ENCODE measurements at regions of chr1 and their contacts with region 1.

Region 1: DNA sequence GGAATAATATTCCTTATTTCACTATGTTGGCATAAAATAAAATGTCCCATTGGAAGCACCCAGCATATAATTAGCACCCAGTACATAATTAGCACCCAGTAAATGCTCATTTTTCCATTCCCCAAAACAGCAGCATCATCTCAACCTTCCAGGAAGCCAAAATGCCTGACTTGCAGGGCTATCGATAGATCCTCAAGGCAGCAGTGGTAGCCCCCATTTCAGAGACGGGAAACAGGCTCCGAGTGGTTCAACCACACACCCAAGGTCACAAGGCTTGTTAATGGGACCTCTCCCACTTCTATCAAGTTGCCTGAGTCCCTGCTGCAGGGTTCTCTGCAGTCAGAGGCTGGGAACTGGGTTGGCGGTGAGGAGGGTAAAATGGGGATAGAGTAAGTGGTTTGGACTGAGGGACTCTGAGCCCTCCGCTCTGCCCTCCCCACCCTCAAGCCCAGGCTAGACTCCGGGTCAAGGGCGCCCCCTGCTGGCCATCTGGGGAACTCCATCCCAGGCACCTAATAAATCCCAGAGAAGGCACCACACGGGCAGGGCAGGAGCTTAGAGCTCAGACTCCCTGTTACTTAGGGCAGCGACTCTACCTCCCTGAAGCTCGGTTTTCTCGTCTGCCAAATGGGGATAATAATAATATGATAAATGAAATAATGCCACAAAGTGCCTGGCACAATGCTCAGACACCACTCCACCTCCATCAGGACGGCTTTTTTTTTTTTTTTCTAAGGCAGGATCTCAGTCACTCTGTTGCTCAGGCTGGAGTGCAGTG is 21.9 kb upstream of the LAPTM5 start:
- DNase-seq: peak; percentile 96
- ATAC-seq: peak; percentile 77
- H3K4me3 Mint-ChIP-seq: peak overlapping the region; percentile 15
- H3K27ac Mint-ChIP-seq: peak overlapping the region; percentile 87
- H3K4me1 Mint-ChIP-seq: peaks cover 47% of the 10 kb centered on the region
- H3K27me3 Mint-ChIP-seq: no peaks in the 10 kb centered on the region
- CTCF ChIP-seq: peak; percentile 79

Region 2: GRCh38 chr1:29230553-29231378 is 1548.7 kb before region 1 on chr1 and contains the start of gene MECR:
- CTCF ChIA-PET with region 1: no interaction called
- POLR2A ChIA-PET with region 1: no interaction called
- intact Hi-C with region 1: loop called (anchors 10 kb)
- DNase-seq: peak; percentile 98
- ATAC-seq: peak; percentile 97
- H3K4me3 Mint-ChIP-seq: peak within 1 kb of the TSS; percentile 93
- H3K27ac Mint-ChIP-seq: peak within 1 kb of the TSS; percentile 84
- H3K4me1 Mint-ChIP-seq: peaks cover 18% of the 10 kb centered on the region
- H3K27me3 Mint-ChIP-seq: peaks cover 11% of the 10 kb centered on the region
- CTCF ChIP-seq: no peak
- total RNA-seq, gene MECR: 18.7 and 23.7 TPM in 2 replicates

Region 3: DNA sequence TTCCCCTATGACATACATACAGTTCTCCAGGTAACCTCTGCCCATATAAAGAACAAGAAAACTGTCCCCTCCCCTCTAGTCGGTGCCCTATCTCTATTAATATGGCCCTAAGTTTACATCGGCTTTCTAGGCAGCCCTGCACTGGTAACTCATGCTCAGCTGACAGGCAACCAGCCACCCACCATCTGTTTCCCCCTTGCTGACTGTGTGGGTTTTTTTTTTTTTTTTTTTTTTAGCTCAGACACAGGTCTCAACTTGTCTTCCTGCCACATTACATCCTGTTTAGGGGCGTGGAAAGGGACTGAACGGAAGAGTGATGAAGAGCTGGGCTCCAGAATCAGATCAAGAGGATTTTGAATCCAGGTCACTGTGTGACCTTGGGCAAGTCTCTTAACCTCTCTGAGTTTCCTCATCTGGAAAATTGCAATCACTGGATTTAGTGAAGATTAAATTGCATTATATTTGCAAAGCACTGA is 35.9 kb before region 1 on chr1:
- CTCF ChIA-PET with region 1: interaction called, 46 read pairs
- POLR2A ChIA-PET with region 1: interaction called, 177 read pairs
- intact Hi-C with region 1: loop called (anchors 1 kb)
- DNase-seq: no peak
- ATAC-seq: peak; percentile 72
- H3K4me3 Mint-ChIP-seq: peak overlapping the region; percentile 72
- H3K27ac Mint-ChIP-seq: peak overlapping the region; percentile 96
- H3K4me1 Mint-ChIP-seq: peaks cover 99% of the 10 kb centered on the region
- H3K27me3 Mint-ChIP-seq: no peaks in the 10 kb centered on the region
- CTCF ChIP-seq: no peak

Region 4: GRCh38 chr1:30756545-30757195 is 22.8 kb before region 1 on chr1:
- CTCF ChIA-PET with region 1: interaction called, 31 read pairs
- POLR2A ChIA-PET with region 1: interaction called, 177 read pairs
- intact Hi-C with region 1: loop called (anchors 1 kb)
- DNase-seq: peak; percentile 65
- ATAC-seq: peak; percentile 35
- H3K4me3 Mint-ChIP-seq: peak overlapping the region; percentile 99
- H3K27ac Mint-ChIP-seq: peak overlapping the region; percentile 96
- H3K4me1 Mint-ChIP-seq: peaks cover 89% of the 10 kb centered on the region
- H3K27me3 Mint-ChIP-seq: no peaks in the 10 kb centered on the region
- CTCF ChIP-seq: no peak

Region 5: DNA sequence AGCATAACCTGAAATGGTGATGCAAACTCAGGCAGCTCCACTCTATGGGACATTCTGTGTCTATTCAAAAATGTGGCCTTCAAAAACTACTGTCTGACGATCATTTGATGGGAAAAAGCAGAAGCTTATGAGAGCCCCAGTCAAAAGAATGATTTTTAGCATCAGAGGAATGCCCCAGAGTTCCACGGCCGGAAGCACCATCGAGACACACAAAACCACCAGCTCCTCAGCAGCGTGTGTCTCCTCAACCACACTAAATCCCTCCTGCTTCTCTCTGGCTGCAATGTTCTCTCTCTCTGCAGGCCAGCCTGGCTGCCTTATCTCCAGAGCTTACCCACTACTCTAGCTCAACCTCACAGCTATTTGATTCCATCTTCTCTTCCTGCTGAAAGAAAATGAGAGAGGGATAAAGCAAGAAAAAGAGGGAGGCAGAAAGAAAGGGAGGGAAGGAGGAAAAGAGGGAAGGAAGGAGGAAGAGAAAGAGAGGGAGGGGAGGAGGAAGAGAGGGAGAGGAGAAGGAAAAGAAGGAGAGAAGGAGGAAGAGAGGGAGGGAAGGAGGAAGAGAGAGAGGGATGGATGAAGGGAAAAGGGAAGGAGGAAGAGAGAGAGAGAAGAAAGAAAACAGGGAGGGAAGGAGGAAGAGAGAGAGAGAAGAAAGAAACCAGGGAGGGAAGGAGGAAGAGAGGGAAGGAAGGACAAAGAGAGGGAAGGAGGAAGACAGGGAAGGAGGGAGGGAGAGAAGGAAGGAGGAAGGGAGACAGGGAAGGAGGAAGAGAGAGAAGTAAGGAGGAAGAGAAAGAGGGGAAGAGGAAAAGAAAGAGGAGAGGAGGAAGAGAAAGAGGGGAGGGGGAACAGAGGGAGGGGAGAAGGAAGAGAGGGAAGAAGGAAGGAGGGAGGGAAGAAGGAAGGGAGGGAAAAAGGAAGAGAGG is 11.6 kb after region 1 on chr1:
- CTCF ChIA-PET with region 1: interaction called, 15 read pairs
- POLR2A ChIA-PET with region 1: interaction called, 9 read pairs
- intact Hi-C with region 1: loop called (anchors 1 kb)
- DNase-seq: no peak
- ATAC-seq: peak; percentile 82
- H3K4me3 Mint-ChIP-seq: peak overlapping the region; percentile 58
- H3K27ac Mint-ChIP-seq: peak overlapping the region; percentile 72
- H3K4me1 Mint-ChIP-seq: peaks cover 31% of the 10 kb centered on the region
- H3K27me3 Mint-ChIP-seq: peaks cover 12% of the 10 kb centered on the region
- CTCF ChIP-seq: no peak

Region 6: DNA sequence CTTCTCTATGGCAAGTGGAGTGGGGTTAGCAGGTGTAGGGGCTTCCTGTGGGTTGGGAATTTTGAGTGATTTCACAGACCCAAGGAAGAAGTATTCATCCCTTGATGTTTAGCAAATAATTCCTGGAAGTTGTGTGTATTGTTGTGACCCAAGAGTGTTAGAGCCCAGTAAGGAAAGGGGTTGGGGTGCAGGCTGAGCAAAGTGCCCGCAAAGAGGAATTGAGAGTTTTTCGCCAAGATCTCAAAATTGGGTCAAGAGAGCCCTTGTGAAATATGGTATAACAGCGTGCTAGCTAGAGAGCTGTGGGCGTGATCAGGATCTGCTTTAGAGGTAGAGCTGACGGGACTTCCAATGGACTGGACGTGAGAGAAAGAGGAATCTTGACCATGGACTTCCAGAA is 51.1 kb after region 1 on chr1:
- CTCF ChIA-PET with region 1: no interaction called
- POLR2A ChIA-PET with region 1: no interaction called
- intact Hi-C with region 1: no loop called
- DNase-seq: no peak
- ATAC-seq: no peak
- H3K4me3 Mint-ChIP-seq: no peak overlapping the region
- H3K27ac Mint-ChIP-seq: no peak overlapping the region
- H3K4me1 Mint-ChIP-seq: no peaks in the 10 kb centered on the region
- H3K27me3 Mint-ChIP-seq: peaks cover 37% of the 10 kb centered on the region
- CTCF ChIP-seq: no peak

Region 7: GRCh38 chr1:30895944-30896660 is 116.6 kb after region 1 on chr1:
- CTCF ChIA-PET with region 1: no interaction called
- POLR2A ChIA-PET with region 1: no interaction called
- intact Hi-C with region 1: no loop called
- DNase-seq: no peak
- ATAC-seq: no peak
- H3K4me3 Mint-ChIP-seq: no peak overlapping the region
- H3K27ac Mint-ChIP-seq: no peak overlapping the region
- H3K4me1 Mint-ChIP-seq: peaks cover 25% of the 10 kb centered on the region
- H3K27me3 Mint-ChIP-seq: peaks cover 29% of the 10 kb centered on the region
- CTCF ChIP-seq: no peak

Region 8: GRCh38 chr1:30911046-30911954 is 131.8 kb after region 1 on chr1:
- CTCF ChIA-PET with region 1: interaction called, 40 read pairs
- POLR2A ChIA-PET with region 1: interaction called, 3 read pairs
- intact Hi-C with region 1: loop called (anchors 1 kb)
- DNase-seq: peak; percentile 47
- ATAC-seq: peak; percentile 48
- H3K4me3 Mint-ChIP-seq: no peak overlapping the region
- H3K27ac Mint-ChIP-seq: no peak overlapping the region
- H3K4me1 Mint-ChIP-seq: peaks cover 25% of the 10 kb centered on the region
- H3K27me3 Mint-ChIP-seq: peaks cover 30% of the 10 kb centered on the region
- CTCF ChIP-seq: no peak

Region 9: GRCh38 chr1:31155216-31155841 is 375.8 kb after region 1 on chr1:
- CTCF ChIA-PET with region 1: no interaction called
- POLR2A ChIA-PET with region 1: no interaction called
- intact Hi-C with region 1: loop called (anchors 10 kb)
- DNase-seq: peak; percentile 70
- ATAC-seq: peak; percentile 77
- H3K4me3 Mint-ChIP-seq: peak overlapping the region; percentile 85
- H3K27ac Mint-ChIP-seq: peak overlapping the region; percentile 70
- H3K4me1 Mint-ChIP-seq: peaks cover 11% of the 10 kb centered on the region
- H3K27me3 Mint-ChIP-seq: no peaks in the 10 kb centered on the region
- CTCF ChIP-seq: no peak

Measured in activated B cell treated with CpG ODN at 0.5 μM for 24 hours (primary cell).